H1 (cell line): ENCODE measurements at regions of chr17 and their contacts with region 1.

Region 1: GRCh38 chr17:56939901-56940343 is 20.9 kb downstream of the COIL start:
- DNase-seq: peak in 1 of 2 experiments; percentile 45
- H3K4me3 ChIP-seq: no peak overlapping the region
- H3K27ac ChIP-seq: no peak overlapping the region
- H3K4me1 ChIP-seq: no peaks in the 10 kb centered on the region
- H3K27me3 ChIP-seq: no peaks in the 10 kb centered on the region
- CTCF ChIP-seq: peak in 2 of 3 experiments; percentile 57 to 63; a peak in 2 of 4 replicates
- EP300 ChIP-seq: no peak
- POLR2A ChIP-seq: no peak
- RAD21 ChIP-seq: peak; percentile 88

Region 2: GRCh38 chr17:56819431-56820145 is 120.3 kb before region 1 on chr17:
- CTCF ChIA-PET with region 1: interaction called, 18 read pairs
- POLR2A ChIA-PET with region 1: interaction called, 3 read pairs
- DNase-seq: peak; percentile 62 to 93
- H3K4me3 ChIP-seq: no peak overlapping the region
- H3K27ac ChIP-seq: no peak overlapping the region
- H3K4me1 ChIP-seq: no peaks in the 10 kb centered on the region
- H3K27me3 ChIP-seq: no peaks in the 10 kb centered on the region
- CTCF ChIP-seq: peak; percentile 56 to 77 (median 76)
- EP300 ChIP-seq: no peak
- POLR2A ChIP-seq: no peak
- RAD21 ChIP-seq: peak; percentile 72 to 81

Region 3: DNA sequence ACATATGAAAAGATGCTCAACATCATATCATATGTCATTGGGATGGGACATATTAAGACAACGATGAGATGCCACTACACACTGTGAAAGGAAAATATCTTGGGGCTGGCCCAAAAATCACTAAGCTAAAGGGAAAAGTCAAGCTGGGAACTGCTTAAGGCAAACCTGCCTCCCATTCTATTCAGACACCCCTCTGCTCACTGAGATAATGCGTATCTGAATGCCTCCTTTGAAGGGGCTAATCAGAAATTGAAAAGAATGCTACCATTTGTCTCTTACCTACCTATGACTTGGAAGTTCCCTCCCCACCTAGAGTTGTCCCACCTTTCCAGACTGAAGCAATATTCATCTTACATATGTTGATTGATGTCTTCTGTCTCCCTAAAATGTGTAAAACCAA is 14.8 kb before region 1 on chr17:
- CTCF ChIA-PET with region 1: interaction called, 10 read pairs
- POLR2A ChIA-PET with region 1: no interaction called
- DNase-seq: no peak
- H3K4me3 ChIP-seq: no peak overlapping the region
- H3K27ac ChIP-seq: no peak overlapping the region
- H3K4me1 ChIP-seq: peaks cover 3 to 12% (median 6%) of the 10 kb centered on the region in 4 experiments; a peak in 5 of 7 replicates
- H3K27me3 ChIP-seq: no peaks in the 10 kb centered on the region
- CTCF ChIP-seq: no peak
- EP300 ChIP-seq: no peak
- POLR2A ChIP-seq: no peak
- RAD21 ChIP-seq: no peak